Left cardiac atrium (tissue), 4 donors: ENCODE measurements at regions of chr20 and their contacts with region 1.

Region 1: DNA sequence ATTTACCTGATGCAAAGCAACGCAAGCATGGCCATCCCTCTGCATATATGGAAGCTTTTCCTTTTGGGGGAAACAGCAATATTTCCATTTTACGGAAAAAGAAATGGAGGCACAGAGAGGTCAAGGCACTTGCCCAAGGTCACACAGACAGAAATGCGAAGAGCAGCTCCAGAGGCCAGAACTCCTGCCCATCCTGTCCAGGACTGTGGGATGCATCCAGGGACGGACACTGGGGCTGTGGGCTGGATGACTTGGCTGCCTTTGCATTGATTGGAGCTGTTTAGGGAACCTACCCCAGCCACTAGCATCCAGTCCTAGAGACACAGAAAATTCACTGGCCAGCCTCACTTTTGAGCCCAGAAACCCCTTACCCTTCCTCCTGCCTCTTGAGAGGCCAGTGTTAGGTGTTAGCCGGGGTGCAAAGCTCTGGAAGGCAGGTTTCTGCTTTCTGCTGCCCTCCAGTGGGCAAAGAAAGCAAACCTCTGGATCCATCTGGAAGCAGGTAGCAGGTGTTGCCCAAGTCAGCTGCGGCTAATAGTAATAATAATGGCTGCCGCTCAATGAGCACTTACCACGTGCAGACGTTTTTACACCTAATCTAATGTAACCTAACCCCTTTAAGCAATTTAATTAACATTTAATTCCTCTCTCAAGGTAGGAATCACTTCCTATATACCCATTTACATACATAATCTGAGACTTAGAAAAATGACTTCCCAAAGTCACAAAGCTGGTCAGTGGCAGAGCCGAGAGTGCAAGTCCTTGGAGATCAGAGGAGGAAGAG is 31.7 kb upstream of the CCN5 start:
- DNase-seq: no peak
- ATAC-seq: peak in 1 of 2 donors; percentile 77

Region 2: GRCh38 chr20:44651684-44652423 is 31.6 kb before region 1 on chr20 and contains the start of gene ADA:
- intact Hi-C with region 1: no loop called
- DNase-seq: peak; percentile 79
- ATAC-seq: peak; percentile 93
- total RNA-seq, gene ADA: 11.3 to 12.2 TPM

Region 3: DNA sequence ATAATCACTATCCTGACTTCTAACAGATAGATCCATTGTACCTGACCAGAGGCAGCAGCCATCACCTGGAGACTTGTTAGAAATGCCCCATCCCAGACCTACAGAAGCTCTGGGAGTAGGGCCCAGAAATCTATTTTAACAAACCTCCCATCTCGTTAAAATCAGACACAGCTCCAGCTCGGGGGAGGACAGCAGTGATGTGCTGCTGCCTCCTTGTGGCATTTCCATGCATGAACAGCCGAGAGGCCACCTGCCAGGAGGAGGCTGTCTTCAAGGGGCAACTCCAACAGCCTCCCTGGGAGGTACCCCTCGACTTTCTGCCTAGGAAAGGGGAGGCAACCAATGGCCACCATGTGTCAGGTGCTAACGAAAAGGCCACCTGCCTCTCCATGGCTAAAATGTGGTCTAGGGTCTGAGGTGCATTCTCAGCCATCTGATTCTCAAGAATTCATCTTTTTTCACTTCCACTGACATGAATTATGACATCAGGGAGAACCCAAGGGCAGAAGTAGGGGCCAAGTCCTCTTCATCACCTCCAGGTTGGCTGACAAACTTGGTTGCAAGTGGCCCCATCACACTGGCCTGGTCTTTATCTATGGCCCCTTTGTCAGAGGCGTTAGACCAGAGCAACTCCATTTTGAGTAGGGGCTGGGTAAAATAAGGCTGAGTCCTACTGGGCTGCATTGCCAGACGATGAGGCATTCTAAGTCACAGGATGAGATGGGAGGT is 50.0 kb after region 1 on chr20:
- intact Hi-C with region 1: loop called (anchors 1 to 2 kb)
- DNase-seq: peak; percentile 76
- ATAC-seq: peak; percentile 42 to 60

Region 4: DNA sequence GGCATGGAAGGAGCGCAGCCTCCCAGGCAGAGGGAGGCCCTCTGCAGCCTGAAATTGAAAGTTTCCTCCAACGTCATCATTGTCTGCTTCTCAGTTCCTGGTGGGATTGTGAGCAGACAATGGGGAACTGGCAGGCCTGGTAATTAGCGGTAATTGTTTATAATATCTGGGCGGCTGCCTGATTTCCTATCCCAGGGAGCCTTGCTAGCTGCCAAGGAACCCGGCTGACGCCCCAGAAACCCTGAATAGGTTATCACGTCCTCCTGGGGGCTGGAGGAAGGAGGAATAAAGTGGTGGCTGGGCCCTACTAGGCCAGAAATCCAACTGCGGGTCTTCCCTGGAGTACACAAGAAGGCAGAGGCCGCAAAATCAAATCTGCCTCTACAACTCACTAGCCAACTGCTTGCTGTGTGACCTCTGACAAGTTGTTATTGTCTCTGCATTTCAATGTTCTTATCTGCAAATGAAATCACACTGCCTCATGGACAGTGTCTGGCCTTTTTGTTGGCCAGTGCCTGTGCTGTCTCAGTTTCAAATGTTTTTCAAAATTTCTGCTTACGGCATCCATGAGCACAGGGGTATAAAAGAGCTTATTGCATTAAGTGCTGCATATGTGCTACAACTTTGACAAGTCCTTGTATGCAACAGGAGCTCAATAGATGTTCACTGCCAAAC is 79.1 kb after region 1 on chr20:
- intact Hi-C with region 1: no loop called
- DNase-seq: no peak
- ATAC-seq: peak; percentile 15 to 46

Region 5: DNA sequence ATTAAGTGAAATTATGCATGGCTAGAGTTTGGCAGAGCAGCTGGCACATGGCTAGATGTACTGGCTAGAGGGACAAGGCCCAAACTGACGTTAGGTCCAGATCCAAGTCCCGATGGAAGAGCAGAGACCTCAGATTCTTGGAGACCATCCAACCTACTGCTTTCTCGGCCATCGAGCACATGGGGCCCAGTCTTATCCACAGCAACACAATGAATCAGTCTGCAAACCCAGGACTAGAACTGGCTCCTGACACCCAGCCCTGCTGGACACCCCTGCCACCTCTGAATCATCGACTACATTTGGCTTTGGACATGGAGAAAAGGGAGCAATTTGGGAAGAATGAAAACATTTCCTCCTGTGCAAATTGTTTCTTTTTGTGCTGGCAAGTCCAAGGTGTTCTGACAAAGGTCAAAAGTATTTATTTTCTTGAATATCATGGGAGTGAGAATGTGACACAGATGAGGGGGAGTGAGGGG is 178.1 kb after region 1 on chr20:
- intact Hi-C with region 1: loop called (anchors 5 to 10 kb)
- DNase-seq: peak; percentile 41
- ATAC-seq: peak; percentile 85 to 90

Region 6: DNA sequence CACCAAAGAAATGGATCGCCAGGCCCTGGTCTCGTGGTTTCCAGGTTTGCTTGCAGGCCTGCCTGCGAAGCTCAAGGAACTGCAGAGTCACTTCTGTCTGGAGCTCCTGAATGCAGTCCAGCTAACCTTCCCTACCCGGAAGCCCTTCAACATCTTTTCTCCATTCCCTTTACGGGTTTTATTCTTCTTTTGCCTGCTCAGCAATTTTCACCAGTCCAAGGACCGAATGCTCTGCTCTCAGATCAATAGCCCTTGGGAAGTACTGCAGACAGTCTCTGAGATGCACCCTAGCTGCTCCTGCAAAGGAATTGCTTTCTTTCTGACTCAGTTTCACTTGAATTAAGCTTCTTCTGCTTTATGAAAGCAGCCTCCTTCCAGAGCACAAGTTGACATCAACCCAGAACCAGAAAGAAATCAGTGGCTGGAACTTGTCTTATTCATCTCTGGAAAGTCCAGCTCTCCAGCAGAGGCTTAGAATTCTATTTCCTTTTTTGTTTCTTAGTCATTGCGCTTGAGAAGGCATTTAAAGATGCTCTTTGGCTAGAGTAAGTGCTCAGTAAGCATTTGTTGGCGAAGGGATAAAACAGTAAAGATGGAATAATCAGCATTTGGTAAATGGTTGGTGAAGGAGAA is 183.4 kb after region 1 on chr20:
- intact Hi-C with region 1: loop called (anchors 5 to 10 kb)
- DNase-seq: no peak
- ATAC-seq: no peak